WTC11 (cell line): ENCODE measurements at regions of chr11 and their contacts with region 1.

Region 1: GRCh38 chr11:61567286-61568061 is 13.4 kb downstream of the SYT7 start:
- DNase-seq: peak; percentile 90
- ATAC-seq: peak; percentile 86
- H3K4me3 Mint-ChIP-seq: peak overlapping the region; percentile 59
- H3K27ac Mint-ChIP-seq: no peak overlapping the region
- H3K4me1 Mint-ChIP-seq: peaks cover 28% of the 10 kb centered on the region
- H3K27me3 Mint-ChIP-seq: peaks cover 19% of the 10 kb centered on the region
- CTCF ChIP-seq: peak; percentile 99

Region 2: DNA sequence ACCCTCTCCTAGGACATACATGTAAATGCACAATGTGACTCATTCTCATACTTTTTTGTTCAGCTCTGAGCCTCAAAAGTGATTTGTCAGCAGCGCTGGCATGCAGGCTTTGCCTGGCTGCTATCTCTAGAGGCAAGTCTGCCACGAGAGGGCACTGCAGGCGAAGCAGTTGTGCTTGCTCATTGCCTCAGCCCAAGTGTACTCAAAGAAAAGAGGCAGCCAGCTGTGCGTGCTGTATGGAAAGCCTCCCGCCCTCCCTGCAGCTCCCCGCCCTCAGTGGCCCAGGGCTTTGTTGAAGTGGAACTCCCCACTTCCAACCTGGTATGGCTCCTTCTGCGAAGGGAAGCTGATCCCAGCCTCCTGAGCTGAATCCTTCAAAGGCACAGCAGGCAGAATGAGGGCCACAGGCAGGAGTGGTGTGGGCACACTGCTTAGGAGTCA is 121.2 kb before region 1 on chr11:
- CTCF ChIA-PET with region 1: interaction called, 16 read pairs
- POLR2A ChIA-PET with region 1: no interaction called
- DNase-seq: peak; percentile 95
- ATAC-seq: peak; percentile 93
- H3K4me3 Mint-ChIP-seq: no peak overlapping the region
- H3K27ac Mint-ChIP-seq: peak overlapping the region; percentile 82; the same call in 1 of the 2 replicates
- H3K4me1 Mint-ChIP-seq: no peaks in the 10 kb centered on the region
- H3K27me3 Mint-ChIP-seq: no peaks in the 10 kb centered on the region
- CTCF ChIP-seq: peak; percentile 47

Region 3: GRCh38 chr11:61532139-61533038 is 35.1 kb before region 1 on chr11:
- CTCF ChIA-PET with region 1: interaction called, 50 read pairs
- POLR2A ChIA-PET with region 1: no interaction called
- DNase-seq: peak; percentile 77
- ATAC-seq: peak; percentile 85
- H3K4me3 Mint-ChIP-seq: no peak overlapping the region
- H3K27ac Mint-ChIP-seq: no peak overlapping the region
- H3K4me1 Mint-ChIP-seq: peaks cover 10% of the 10 kb centered on the region
- H3K27me3 Mint-ChIP-seq: no peaks in the 10 kb centered on the region
- CTCF ChIP-seq: peak; percentile 98

Region 4: DNA sequence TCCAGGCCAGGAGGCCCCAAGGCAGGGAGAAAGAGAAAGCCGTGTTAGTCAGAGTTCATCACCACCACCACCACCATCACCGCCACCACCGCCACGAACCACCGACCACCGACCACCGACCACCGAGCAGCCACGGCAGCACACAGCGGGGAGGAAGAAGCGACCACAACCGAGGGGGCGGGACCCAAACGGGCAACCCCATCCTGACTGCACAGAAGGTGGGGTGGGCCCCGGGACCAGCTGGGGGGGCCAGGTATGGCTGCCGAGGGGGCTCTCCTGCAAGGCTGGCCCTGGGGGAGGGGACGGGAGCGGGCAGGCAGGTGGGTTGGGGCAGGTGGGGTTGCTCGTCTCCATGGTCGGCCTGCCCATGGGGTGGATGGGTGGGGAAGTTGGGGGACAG is 20.8 kb before region 1 on chr11:
- CTCF ChIA-PET with region 1: interaction called, 47 read pairs
- POLR2A ChIA-PET with region 1: no interaction called
- DNase-seq: no peak
- ATAC-seq: no peak
- H3K4me3 Mint-ChIP-seq: no peak overlapping the region
- H3K27ac Mint-ChIP-seq: no peak overlapping the region
- H3K4me1 Mint-ChIP-seq: peaks cover 19% of the 10 kb centered on the region
- H3K27me3 Mint-ChIP-seq: no peaks in the 10 kb centered on the region; the same call in 1 of the 2 replicates
- CTCF ChIP-seq: no peak

Region 5: GRCh38 chr11:61581030-61581928 is 13.8 kb after region 1 on chr11 and contains the start of gene SYT7:
- CTCF ChIA-PET with region 1: interaction called, 66 read pairs
- POLR2A ChIA-PET with region 1: interaction called, 4 read pairs
- DNase-seq: peak; percentile 99
- ATAC-seq: peak; percentile 83
- H3K4me3 Mint-ChIP-seq: peak within 1 kb of the TSS; percentile 79
- H3K27ac Mint-ChIP-seq: no peak within 1 kb of the TSS
- H3K4me1 Mint-ChIP-seq: peaks cover 56% of the 10 kb centered on the region
- H3K27me3 Mint-ChIP-seq: peaks cover 61% of the 10 kb centered on the region
- CTCF ChIP-seq: no peak; the same call in 1 of the 2 replicates
- total RNA-seq, gene SYT7: 12.5 to 18.9 TPM (median 18.2 TPM) in 3 replicates

Region 6: DNA sequence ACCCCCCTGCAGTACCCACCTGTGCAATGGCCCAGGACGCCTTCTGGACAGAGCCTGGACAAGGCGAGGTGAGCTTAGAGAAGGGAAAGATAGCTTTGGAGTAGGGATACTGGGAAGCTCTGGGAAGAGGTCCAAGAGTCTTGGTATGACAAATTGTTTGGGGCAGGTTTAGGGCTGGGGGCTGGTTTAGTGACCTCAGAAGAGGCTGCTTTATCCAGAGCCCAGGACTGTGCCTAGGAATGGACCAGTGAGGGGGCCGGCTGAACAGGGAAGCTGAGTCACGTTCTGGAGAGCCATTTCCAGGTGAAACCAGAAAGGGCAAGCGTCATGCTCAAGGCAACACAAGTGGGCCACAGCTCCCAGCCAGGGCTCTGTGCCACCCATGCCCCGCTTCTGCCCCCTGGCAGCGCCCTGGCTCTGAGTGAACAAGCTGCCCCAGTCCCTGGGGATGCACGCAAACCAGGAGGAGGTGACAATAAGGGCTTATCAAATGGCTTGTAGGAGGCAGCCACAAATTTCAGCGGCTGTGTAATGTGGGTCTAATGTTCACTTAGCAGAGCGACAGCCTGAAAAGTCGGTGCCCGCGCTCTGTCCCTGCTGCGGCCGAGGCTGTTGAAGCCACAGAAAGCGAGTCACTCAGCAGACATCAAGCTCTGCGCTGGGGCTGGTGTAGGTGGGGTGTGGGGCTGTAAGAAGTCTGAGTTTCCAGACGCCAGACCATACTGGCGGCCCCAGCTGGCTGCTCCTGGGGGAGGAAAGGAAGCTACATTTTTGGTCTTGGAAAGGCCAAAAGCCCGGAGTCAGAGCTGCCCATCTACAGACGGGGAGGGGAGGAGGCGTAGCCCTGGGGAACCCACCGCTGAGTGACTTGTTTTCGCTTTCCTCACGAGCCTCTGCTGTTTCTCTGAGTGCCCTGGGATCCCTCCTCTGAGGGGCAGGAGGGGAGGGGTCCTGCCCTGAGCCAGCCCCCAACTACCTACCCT is 31.7 kb after region 1 on chr11:
- CTCF ChIA-PET with region 1: interaction called, 13 read pairs
- POLR2A ChIA-PET with region 1: no interaction called
- DNase-seq: peak; percentile 59
- ATAC-seq: peak; percentile 77
- H3K4me3 Mint-ChIP-seq: peak overlapping the region; percentile 38; the same call in 1 of the 2 replicates
- H3K27ac Mint-ChIP-seq: peak overlapping the region; percentile 60; the same call in 1 of the 2 replicates
- H3K4me1 Mint-ChIP-seq: peaks cover 44% of the 10 kb centered on the region
- H3K27me3 Mint-ChIP-seq: no peaks in the 10 kb centered on the region; the same call in 1 of the 2 replicates
- CTCF ChIP-seq: no peak

Region 7: DNA sequence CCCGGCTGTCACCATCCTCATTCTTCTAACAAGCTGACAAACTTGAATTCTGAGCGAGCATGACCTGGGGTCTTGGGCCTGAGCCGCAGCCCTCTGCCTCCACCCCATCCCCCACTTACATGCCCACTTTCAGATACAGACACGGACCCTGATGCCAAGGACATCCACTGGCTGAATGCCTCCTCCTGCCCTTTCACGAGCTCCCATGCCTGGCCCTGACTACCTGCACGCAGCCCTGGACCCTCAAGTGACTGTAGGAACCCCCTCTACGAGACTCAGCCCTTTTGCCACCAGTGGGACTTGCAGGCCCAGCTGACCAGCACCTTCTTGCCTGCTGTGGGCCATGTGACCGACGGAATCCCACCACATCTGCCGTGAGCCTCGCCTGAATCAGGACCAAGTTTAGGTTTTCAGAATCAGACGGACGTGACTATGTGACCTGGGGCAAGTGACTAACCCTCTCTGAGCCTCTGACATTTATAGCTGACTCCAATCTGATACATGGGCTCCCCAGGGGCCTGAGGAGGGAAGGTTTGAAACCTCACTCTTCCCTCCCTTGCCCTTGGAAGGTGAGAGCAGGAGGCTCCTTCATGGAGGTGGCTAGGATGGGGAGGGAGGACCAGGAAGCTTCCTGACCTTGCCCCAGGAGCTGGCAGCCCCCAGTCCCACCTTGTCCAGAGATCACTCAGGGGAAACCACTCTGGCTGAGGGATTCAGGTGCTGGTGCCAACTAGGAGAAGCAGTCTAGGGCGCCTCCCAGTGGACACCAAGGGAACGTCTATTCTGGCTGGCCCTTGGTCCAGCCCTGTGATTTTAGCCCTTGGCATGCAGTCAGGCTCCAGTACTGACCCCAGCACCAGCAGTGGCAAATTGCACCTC is 60.3 kb after region 1 on chr11:
- CTCF ChIA-PET with region 1: interaction called, 48 read pairs
- POLR2A ChIA-PET with region 1: no interaction called
- DNase-seq: peak; percentile 87
- ATAC-seq: peak; percentile 79
- H3K4me3 Mint-ChIP-seq: no peak overlapping the region
- H3K27ac Mint-ChIP-seq: peak overlapping the region; percentile 70
- H3K4me1 Mint-ChIP-seq: peaks cover 50% of the 10 kb centered on the region
- H3K27me3 Mint-ChIP-seq: no peaks in the 10 kb centered on the region
- CTCF ChIP-seq: peak; percentile 92

Region 8: GRCh38 chr11:61797263-61797944 is 229.9 kb after region 1 on chr11:
- CTCF ChIA-PET with region 1: no interaction called
- POLR2A ChIA-PET with region 1: no interaction called
- DNase-seq: peak; percentile 70
- ATAC-seq: peak; percentile 9; the same call in 1 of the 2 replicates
- H3K4me3 Mint-ChIP-seq: no peak overlapping the region
- H3K27ac Mint-ChIP-seq: peak overlapping the region; percentile 2
- H3K4me1 Mint-ChIP-seq: peaks cover 15% of the 10 kb centered on the region
- H3K27me3 Mint-ChIP-seq: no peaks in the 10 kb centered on the region
- CTCF ChIP-seq: peak; percentile 36; the same call in 1 of the 2 replicates